ENCODE measurements at regions of chr18 and their contacts with region 1.

Region 1: GRCh38 chr18:50967714-50968661 is at the start of gene ELAC1:
- DNase-seq: peak; percentile 72 to 86 (median 81)
- H3K4me3 ChIP-seq: peak within 1 kb of the TSS; percentile 65 to 94 (median 89)
- H3K27ac ChIP-seq: peak within 1 kb of the TSS; percentile 94 to 97
- H3K4me1 ChIP-seq: peaks cover 7 to 15% (median 11%) of the 10 kb centered on the region in 4 experiments
- H3K27me3 ChIP-seq: no peaks in the 10 kb centered on the region

Region 2: GRCh38 chr18:50727721-50728471 is 240.1 kb before region 1 on chr18:
- CTCF ChIA-PET with region 1: no interaction called
- POLR2A ChIA-PET with region 1: no interaction called
- DNase-seq: no peak
- H3K4me3 ChIP-seq: no peak overlapping the region
- H3K27ac ChIP-seq: no peak overlapping the region
- H3K4me1 ChIP-seq: no peaks in the 10 kb centered on the region
- H3K27me3 ChIP-seq: peaks cover 0 to 18% (median 11%) of the 10 kb centered on the region in 5 experiments

Region 3: DNA sequence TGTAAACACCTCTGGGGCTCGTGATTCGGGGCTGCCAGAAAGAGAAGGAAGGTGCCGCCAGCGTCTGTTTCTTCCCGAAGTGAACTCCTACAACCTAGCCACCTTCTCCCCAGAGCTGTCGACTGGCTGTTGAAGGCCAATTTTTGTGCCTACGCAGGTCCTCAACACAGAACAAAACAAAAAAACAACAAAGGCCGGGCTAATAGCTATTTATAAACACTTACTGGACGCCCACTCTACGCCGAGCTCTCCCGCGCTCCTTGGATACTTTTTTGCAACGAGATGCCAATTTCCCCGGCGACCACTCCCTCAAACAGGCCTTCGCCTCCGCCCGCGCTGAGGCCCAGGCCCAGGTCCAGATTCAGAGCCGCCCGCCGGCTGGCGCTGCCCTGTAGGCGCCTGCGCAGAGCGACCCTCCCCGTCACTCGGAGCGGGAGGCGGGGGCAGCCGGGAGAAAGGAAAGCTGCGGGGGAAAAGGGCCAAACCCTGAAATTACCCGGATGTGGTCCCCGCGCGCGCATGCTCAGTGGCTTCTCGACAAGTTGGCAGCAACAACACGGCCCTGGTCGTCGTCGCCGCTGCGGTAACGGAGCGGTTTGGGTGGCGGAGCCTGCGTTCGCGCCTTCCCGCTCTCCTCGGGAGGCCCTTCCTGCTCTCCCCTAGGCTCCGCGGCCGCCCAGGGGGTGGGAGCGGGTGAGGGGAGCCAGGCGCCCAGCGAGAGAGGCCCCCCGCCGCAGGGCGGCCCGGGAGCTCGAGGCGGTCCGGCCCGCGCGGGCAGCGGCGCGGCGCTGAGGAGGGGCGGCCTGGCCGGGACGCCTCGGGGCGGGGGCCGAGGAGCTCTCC is 61.9 kb after region 1 on chr18 and contains the start of gene SMAD4:
- CTCF ChIA-PET with region 1: interaction called, 5 read pairs
- POLR2A ChIA-PET with region 1: interaction called, 14 read pairs
- DNase-seq: peak; percentile 96 to 98 (median 97)
- H3K4me3 ChIP-seq: peak within 1 kb of the TSS; percentile 72 to 94 (median 84)
- H3K27ac ChIP-seq: peak within 1 kb of the TSS; percentile 91 to 95
- H3K4me1 ChIP-seq: peaks cover 18 to 45% (median 32%) of the 10 kb centered on the region in 4 experiments
- H3K27me3 ChIP-seq: no peaks in the 10 kb centered on the region